ENCODE measurements at regions of chr4 and their contacts with region 1.

Region 1: GRCh38 chr4:83582289-83582769 is 46.4 kb downstream of the GPAT3 start:
- DNase-seq: peak; percentile 8
- ATAC-seq: no peak
- H3K4me3 Mint-ChIP-seq: no peak overlapping the region
- H3K27ac Mint-ChIP-seq: no peak overlapping the region
- H3K4me1 Mint-ChIP-seq: no peaks in the 10 kb centered on the region
- H3K27me3 Mint-ChIP-seq: no peaks in the 10 kb centered on the region

Region 2: GRCh38 chr4:83378419-83378818 is 203.9 kb before region 1 on chr4:
- CTCF ChIA-PET with region 1: no interaction called
- POLR2A ChIA-PET with region 1: no interaction called
- intact Hi-C with region 1: no loop called
- DNase-seq: peak; percentile 26
- ATAC-seq: no peak
- H3K4me3 Mint-ChIP-seq: no peak overlapping the region
- H3K27ac Mint-ChIP-seq: no peak overlapping the region
- H3K4me1 Mint-ChIP-seq: no peaks in the 10 kb centered on the region
- H3K27me3 Mint-ChIP-seq: peaks cover 4% of the 10 kb centered on the region

Region 3: DNA sequence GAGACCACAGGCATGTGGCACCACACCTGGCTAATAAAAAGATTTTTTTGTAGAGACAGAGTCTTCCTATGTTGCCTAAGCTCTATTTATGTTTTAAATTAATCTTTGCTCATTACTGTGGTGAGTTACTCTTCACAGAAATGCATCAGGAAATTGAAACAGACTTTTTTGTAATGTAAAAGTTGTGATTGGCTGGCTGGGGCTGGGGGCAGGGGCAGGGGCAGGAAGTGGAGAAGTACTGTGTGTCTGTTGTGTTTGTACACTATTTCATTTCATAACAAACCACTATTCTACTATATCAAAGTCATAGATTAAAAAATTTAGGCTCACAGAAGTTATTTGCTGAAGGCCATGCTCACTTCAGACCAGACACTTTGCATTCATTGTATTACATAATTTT is 78.4 kb before region 1 on chr4:
- CTCF ChIA-PET with region 1: interaction called, 6 read pairs
- POLR2A ChIA-PET with region 1: no interaction called
- intact Hi-C with region 1: loop called in 1 of 2 experiments (anchors 5 kb)
- DNase-seq: peak; percentile 28
- ATAC-seq: peak; percentile 51
- H3K4me3 Mint-ChIP-seq: no peak overlapping the region
- H3K27ac Mint-ChIP-seq: peak overlapping the region; percentile 32
- H3K4me1 Mint-ChIP-seq: peaks cover 12% of the 10 kb centered on the region
- H3K27me3 Mint-ChIP-seq: no peaks in the 10 kb centered on the region

Region 4: GRCh38 chr4:83535520-83536361 is 46.6 kb before region 1 on chr4 and contains the start of gene GPAT3:
- CTCF ChIA-PET with region 1: no interaction called
- POLR2A ChIA-PET with region 1: no interaction called
- intact Hi-C with region 1: no loop called
- DNase-seq: peak; percentile 84
- ATAC-seq: peak; percentile 92
- H3K4me3 Mint-ChIP-seq: peak within 1 kb of the TSS; percentile 73
- H3K27ac Mint-ChIP-seq: peak within 1 kb of the TSS; percentile 49
- H3K4me1 Mint-ChIP-seq: peaks cover 16% of the 10 kb centered on the region
- H3K27me3 Mint-ChIP-seq: peaks cover 31% of the 10 kb centered on the region
- total RNA-seq, gene GPAT3: 1.3 to 1.6 TPM